ENCODE measurements at regions of chr10 and their contacts with region 1.

Region 1: GRCh38 chr10:68901104-68901927 is at the start of gene DDX50:
- DNase-seq: peak; percentile 97
- ATAC-seq: peak; percentile 94
- H3K4me3 ChIP-seq: peak within 1 kb of the TSS; percentile 67 to 97 (median 91)
- H3K4me3 Mint-ChIP-seq: peak within 1 kb of the TSS; percentile 98
- H3K27ac ChIP-seq: peak within 1 kb of the TSS; percentile 97 to 100
- H3K27ac Mint-ChIP-seq: peak within 1 kb of the TSS; percentile 100
- H3K4me1 ChIP-seq: peaks cover 20 to 22% of the 10 kb centered on the region in 2 donors
- H3K4me1 Mint-ChIP-seq: peaks cover 32% of the 10 kb centered on the region
- H3K27me3 ChIP-seq: no peaks in the 10 kb centered on the region
- H3K27me3 Mint-ChIP-seq: peaks cover 3% of the 10 kb centered on the region
- CTCF ChIP-seq: no peak
- total RNA-seq, gene DDX50: 38.6 and 39.3 TPM in 2 replicates

Region 2: GRCh38 chr10:68074775-68075549 is 826.4 kb before region 1 on chr10 and contains the start of gene HERC4:
- CTCF ChIA-PET with region 1: no interaction called
- POLR2A ChIA-PET with region 1: no interaction called
- intact Hi-C with region 1: loop called (anchors 2 kb)
- DNase-seq: peak; percentile 96
- ATAC-seq: peak; percentile 88
- H3K4me3 ChIP-seq: peak within 1 kb of the TSS; percentile 83 to 95 (median 90)
- H3K4me3 Mint-ChIP-seq: peak within 1 kb of the TSS; percentile 95
- H3K27ac ChIP-seq: peak within 1 kb of the TSS; percentile 99 to 100
- H3K27ac Mint-ChIP-seq: peak within 1 kb of the TSS; percentile 98
- H3K4me1 ChIP-seq: peaks cover 13 to 33% of the 10 kb centered on the region in 2 donors
- H3K4me1 Mint-ChIP-seq: peaks cover 38% of the 10 kb centered on the region
- H3K27me3 ChIP-seq: no peaks in the 10 kb centered on the region
- H3K27me3 Mint-ChIP-seq: no peaks in the 10 kb centered on the region
- CTCF ChIP-seq: no peak
- total RNA-seq, gene HERC4: 118 and 126 TPM in 2 replicates

Region 3: GRCh38 chr10:68720793-68721672 is 180.3 kb before region 1 on chr10 and contains the start of gene CCAR1:
- CTCF ChIA-PET with region 1: no interaction called
- POLR2A ChIA-PET with region 1: interaction called, 3 read pairs
- intact Hi-C with region 1: loop called (anchors 1 kb)
- DNase-seq: peak; percentile 99
- ATAC-seq: peak; percentile 97
- H3K4me3 ChIP-seq: peak within 1 kb of the TSS; percentile 58 to 96 (median 93)
- H3K4me3 Mint-ChIP-seq: peak within 1 kb of the TSS; percentile 96
- H3K27ac ChIP-seq: peak within 1 kb of the TSS; percentile 81 to 95
- H3K27ac Mint-ChIP-seq: peak within 1 kb of the TSS; percentile 97
- H3K4me1 ChIP-seq: peaks cover 10 to 15% of the 10 kb centered on the region in 2 donors
- H3K4me1 Mint-ChIP-seq: peaks cover 17% of the 10 kb centered on the region
- H3K27me3 ChIP-seq: no peaks in the 10 kb centered on the region
- H3K27me3 Mint-ChIP-seq: no peaks in the 10 kb centered on the region
- CTCF ChIP-seq: no peak
- total RNA-seq, gene CCAR1: 98.9 and 101 TPM in 2 replicates

Region 4: GRCh38 chr10:68924593-68924992 is 23.3 kb after region 1 on chr10:
- CTCF ChIA-PET with region 1: no interaction called
- POLR2A ChIA-PET with region 1: no interaction called
- intact Hi-C with region 1: no loop called
- DNase-seq: no peak
- ATAC-seq: no peak
- H3K4me3 ChIP-seq: no peak overlapping the region
- H3K4me3 Mint-ChIP-seq: no peak overlapping the region
- H3K27ac ChIP-seq: no peak overlapping the region
- H3K27ac Mint-ChIP-seq: no peak overlapping the region
- H3K4me1 ChIP-seq: no peaks in the 10 kb centered on the region
- H3K4me1 Mint-ChIP-seq: no peaks in the 10 kb centered on the region
- H3K27me3 ChIP-seq: no peaks in the 10 kb centered on the region
- H3K27me3 Mint-ChIP-seq: no peaks in the 10 kb centered on the region
- CTCF ChIP-seq: no peak

Region 5: DNA sequence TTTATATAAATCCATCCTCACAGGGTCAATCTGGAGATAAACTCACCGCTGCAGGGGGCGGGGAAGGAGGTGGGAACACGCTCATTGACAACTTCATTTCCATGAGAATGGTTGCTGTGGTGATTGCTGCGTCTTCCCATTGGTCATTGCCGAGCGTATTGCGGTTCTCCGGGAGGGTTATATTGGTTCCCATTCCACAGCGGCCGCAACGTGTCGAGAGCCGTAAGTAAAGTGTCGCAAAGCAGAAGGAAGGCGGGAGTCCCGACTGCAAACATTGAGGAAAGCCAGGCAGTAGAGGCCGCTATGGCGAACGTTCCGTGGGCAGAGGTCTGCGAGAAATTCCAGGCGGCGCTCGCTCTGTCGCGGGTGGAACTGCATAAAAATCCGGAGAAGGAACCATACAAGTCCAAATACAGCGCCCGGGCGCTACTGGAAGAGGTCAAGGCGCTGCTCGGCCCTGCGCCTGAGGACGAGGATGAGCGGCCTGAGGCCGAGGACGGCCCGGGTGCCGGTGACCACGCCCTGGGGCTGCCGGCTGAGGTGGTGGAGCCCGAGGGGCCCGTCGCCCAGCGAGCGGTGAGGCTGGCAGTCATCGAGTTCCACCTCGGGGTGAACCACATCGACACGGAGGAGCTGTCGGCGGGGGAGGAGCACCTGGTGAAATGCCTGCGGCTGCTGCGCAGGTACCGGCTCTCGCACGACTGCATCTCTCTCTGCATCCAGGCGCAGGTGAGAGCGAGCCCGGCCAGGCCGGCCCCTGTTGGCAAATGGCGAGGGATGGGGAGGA is 87.4 kb after region 1 on chr10 and contains the start of gene KIFBP:
- CTCF ChIA-PET with region 1: no interaction called
- POLR2A ChIA-PET with region 1: no interaction called
- intact Hi-C with region 1: loop called (anchors 1 kb)
- DNase-seq: peak; percentile 92
- ATAC-seq: peak; percentile 87
- H3K4me3 ChIP-seq: peak within 1 kb of the TSS; percentile 67 to 90 (median 79)
- H3K4me3 Mint-ChIP-seq: peak within 1 kb of the TSS; percentile 95
- H3K27ac ChIP-seq: peak within 1 kb of the TSS in 1 of 2 donors; percentile 59
- H3K27ac Mint-ChIP-seq: peak within 1 kb of the TSS; percentile 91
- H3K4me1 ChIP-seq: peaks cover 18 to 20% of the 10 kb centered on the region in 2 donors
- H3K4me1 Mint-ChIP-seq: peaks cover 40% of the 10 kb centered on the region
- H3K27me3 ChIP-seq: no peaks in the 10 kb centered on the region
- H3K27me3 Mint-ChIP-seq: no peaks in the 10 kb centered on the region
- CTCF ChIP-seq: peak; percentile 32
- total RNA-seq, gene KIFBP: 13.5 and 15.7 TPM in 2 replicates

Region 6: DNA sequence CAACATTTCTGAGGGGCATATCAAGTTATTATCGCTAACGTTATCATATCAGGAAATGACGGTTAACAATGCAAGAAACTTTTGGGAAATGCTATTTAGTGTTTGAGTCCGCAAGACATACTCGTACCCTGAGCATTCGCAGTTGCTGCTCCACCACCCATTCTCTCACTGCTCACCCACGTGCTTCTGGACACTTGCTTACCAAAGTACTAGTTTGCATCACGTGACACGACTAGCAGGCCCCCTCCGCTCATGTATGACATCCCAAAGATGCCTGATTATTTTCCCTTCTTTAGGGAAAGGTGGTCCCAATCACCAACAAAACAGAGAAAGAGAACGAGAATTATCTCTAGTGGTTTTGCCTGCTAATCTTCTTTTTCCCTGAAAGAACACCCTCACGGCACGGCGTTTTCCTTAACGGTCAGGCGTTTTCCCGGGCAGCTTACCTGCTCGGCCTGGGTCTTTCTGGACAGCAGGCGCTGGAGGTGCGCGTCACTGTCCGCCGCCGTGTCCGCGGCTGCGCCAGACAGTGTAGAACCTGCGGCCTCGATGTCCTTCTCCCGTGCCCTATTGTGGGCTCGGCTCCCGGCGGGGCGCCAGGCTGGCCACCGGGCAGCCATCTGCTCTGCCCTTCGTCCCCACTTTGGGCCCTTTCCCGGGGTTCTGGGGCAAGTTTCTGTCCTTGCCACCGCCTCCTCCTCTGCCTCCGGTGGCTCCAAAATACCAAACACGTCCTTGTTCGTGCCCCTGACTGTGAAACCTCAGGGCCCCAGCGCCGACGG is 278.6 kb after region 1 on chr10 and contains the start of gene SUPV3L1:
- CTCF ChIA-PET with region 1: no interaction called
- POLR2A ChIA-PET with region 1: no interaction called
- intact Hi-C with region 1: loop called (anchors 1 kb)
- DNase-seq: peak; percentile 96
- ATAC-seq: peak; percentile 87
- H3K4me3 ChIP-seq: peak within 1 kb of the TSS; percentile 79 to 96 (median 94)
- H3K4me3 Mint-ChIP-seq: peak within 1 kb of the TSS; percentile 97
- H3K27ac ChIP-seq: peak within 1 kb of the TSS; percentile 91 to 99
- H3K27ac Mint-ChIP-seq: peak within 1 kb of the TSS; percentile 100
- H3K4me1 ChIP-seq: peaks cover 11 to 18% of the 10 kb centered on the region in 2 donors
- H3K4me1 Mint-ChIP-seq: peaks cover 41% of the 10 kb centered on the region
- H3K27me3 ChIP-seq: no peaks in the 10 kb centered on the region
- H3K27me3 Mint-ChIP-seq: no peaks in the 10 kb centered on the region
- CTCF ChIP-seq: no peak
- total RNA-seq, gene SUPV3L1: 37.1 and 40.4 TPM in 2 replicates

Region 7: DNA sequence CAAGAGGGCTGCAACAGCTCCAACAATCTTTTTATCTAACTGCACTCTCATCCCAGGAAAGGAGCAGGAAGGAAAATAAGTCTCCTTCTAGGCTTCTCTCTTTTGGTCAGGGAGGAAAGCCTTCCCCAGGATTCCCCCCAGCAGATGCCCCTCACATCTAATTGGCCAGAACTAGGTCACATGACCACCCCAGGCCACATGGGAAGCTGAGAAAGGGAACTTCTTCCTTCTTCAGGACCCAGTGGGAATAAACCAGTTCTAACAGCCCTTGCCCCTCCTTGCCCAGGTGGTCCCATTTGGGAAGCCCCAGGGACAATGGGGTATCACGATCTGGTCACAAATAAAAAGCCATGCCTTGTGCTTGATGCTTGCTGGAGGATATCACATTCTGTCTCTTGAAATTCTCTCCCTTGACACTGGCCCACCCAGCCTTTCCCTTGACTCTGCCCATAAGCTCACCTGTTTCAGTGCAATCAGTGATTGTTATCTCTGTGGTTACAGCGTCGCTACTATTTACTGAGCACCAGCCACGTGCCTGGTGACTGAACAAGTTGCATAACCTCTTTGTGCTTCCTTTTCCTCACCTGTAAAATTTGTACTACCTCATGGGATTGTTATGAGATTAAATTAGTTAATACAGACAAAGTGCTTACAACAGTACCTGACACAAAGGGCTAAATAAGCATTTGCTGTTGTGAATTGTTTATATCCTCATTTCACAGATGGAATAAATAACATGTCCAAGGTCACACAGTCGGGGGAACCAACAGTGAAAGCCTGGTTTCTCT is 524.4 kb after region 1 on chr10:
- CTCF ChIA-PET with region 1: no interaction called
- POLR2A ChIA-PET with region 1: no interaction called
- intact Hi-C with region 1: no loop called
- DNase-seq: no peak
- ATAC-seq: no peak
- H3K4me3 ChIP-seq: no peak overlapping the region
- H3K4me3 Mint-ChIP-seq: no peak overlapping the region
- H3K27ac ChIP-seq: no peak overlapping the region
- H3K27ac Mint-ChIP-seq: no peak overlapping the region
- H3K4me1 ChIP-seq: peaks cover 5 to 6% of the 10 kb centered on the region in 2 donors
- H3K4me1 Mint-ChIP-seq: peaks cover 4% of the 10 kb centered on the region
- H3K27me3 ChIP-seq: peaks cover 0 to 7% (median 0%) of the 10 kb centered on the region in 4 experiments
- H3K27me3 Mint-ChIP-seq: peaks cover 12% of the 10 kb centered on the region
- CTCF ChIP-seq: no peak